Calu3 (cell line): ENCODE measurements at regions of chr4 and their contacts with region 1.

Region 1: GRCh38 chr4:142567199-142567598 is 278.9 kb downstream of the INPP4B start:
- DNase-seq: peak; percentile 46
- H3K4me3 Mint-ChIP-seq: peak overlapping the region; percentile 75
- H3K27ac Mint-ChIP-seq: peak overlapping the region; percentile 100
- H3K4me1 Mint-ChIP-seq: peaks cover 47% of the 10 kb centered on the region
- H3K27me3 Mint-ChIP-seq: no peaks in the 10 kb centered on the region
- CTCF ChIP-seq: no peak

Region 2: DNA sequence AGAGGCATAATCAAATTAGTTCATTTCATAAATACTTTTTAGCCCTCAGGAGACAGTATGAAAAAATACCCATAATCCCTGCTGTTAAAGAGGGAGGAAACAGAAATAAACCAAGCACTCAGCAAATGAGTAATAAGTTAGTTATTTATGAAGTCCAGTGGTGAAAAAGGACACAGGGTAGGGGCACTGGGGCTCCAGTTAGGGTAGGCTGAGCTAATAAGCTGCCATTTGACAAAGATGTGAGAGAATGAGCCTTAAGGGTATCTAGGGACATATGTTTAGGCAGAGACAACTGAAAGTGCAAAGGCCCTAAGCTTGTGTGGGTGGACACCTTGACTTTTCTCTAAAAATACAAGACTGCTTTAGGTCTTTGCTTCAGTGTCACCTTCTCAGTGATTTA is 836.4 kb before region 1 on chr4:
- CTCF ChIA-PET with region 1: no interaction called
- intact Hi-C with region 1: no loop called
- DNase-seq: no peak
- H3K4me3 Mint-ChIP-seq: no peak overlapping the region
- H3K27ac Mint-ChIP-seq: no peak overlapping the region
- H3K4me1 Mint-ChIP-seq: peaks cover 8% of the 10 kb centered on the region
- H3K27me3 Mint-ChIP-seq: no peaks in the 10 kb centered on the region
- CTCF ChIP-seq: no peak

Region 3: GRCh38 chr4:142126890-142127497 is 440.2 kb before region 1 on chr4:
- CTCF ChIA-PET with region 1: no interaction called
- intact Hi-C with region 1: loop called (anchors 10 kb)
- DNase-seq: peak; percentile 56
- H3K4me3 Mint-ChIP-seq: no peak overlapping the region
- H3K27ac Mint-ChIP-seq: no peak overlapping the region
- H3K4me1 Mint-ChIP-seq: peaks cover 19% of the 10 kb centered on the region
- H3K27me3 Mint-ChIP-seq: no peaks in the 10 kb centered on the region
- CTCF ChIP-seq: peak; percentile 66

Region 4: GRCh38 chr4:142405021-142405694 is 162.0 kb before region 1 on chr4:
- CTCF ChIA-PET with region 1: no interaction called
- intact Hi-C with region 1: loop called (anchors 5 kb)
- DNase-seq: peak; percentile 15
- H3K4me3 Mint-ChIP-seq: peak overlapping the region; percentile 72
- H3K27ac Mint-ChIP-seq: peak overlapping the region; percentile 95
- H3K4me1 Mint-ChIP-seq: peaks cover 36% of the 10 kb centered on the region
- H3K27me3 Mint-ChIP-seq: no peaks in the 10 kb centered on the region
- CTCF ChIP-seq: no peak

Region 5: DNA sequence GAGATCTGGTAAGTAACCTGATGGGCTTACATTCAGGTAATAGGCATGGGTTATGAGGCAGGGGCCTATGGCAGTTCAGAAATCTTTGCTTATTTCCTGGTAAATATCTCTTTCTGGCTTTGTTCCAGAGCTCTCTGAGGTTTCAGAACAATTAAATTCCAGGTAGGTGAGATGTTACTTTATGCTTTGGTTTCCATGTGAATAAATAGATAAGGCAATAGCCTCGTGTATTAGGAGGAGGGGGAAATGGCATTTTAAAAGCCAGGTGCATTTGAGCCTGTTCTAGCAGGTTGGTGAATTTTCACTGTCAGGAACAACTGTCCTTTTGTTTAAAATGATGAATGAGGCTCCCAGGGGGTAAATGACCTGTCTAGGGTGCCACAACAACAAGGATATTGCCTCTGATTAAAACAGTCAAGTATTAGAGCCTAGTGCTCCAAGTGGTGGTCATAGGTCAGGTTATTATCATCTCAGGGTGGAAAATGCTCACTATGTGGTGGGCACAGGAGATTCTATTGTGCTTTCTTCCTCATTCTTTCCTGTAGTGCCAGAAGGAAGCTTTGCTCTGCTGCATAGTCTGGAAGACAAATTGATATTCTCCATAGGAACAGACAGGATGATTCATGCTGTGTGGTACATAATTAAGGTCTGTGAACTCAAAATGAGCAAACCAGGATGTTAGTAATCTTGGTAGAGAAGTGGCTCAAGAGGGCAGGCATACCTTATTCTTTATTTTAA is 17.3 kb before region 1 on chr4:
- CTCF ChIA-PET with region 1: interaction called, 4 read pairs
- intact Hi-C with region 1: loop called (anchors 1 kb)
- DNase-seq: peak; percentile 72
- H3K4me3 Mint-ChIP-seq: no peak overlapping the region
- H3K27ac Mint-ChIP-seq: peak overlapping the region; percentile 99
- H3K4me1 Mint-ChIP-seq: peaks cover 62% of the 10 kb centered on the region
- H3K27me3 Mint-ChIP-seq: no peaks in the 10 kb centered on the region
- CTCF ChIP-seq: no peak

Region 6: GRCh38 chr4:142719854-142720541 is 152.8 kb after region 1 on chr4:
- CTCF ChIA-PET with region 1: interaction called, 8 read pairs
- intact Hi-C with region 1: loop called (anchors 1 kb)
- DNase-seq: no peak
- H3K4me3 Mint-ChIP-seq: no peak overlapping the region
- H3K27ac Mint-ChIP-seq: no peak overlapping the region
- H3K4me1 Mint-ChIP-seq: peaks cover 15% of the 10 kb centered on the region
- H3K27me3 Mint-ChIP-seq: no peaks in the 10 kb centered on the region
- CTCF ChIP-seq: no peak